ENCODE measurements at regions of chr5 and their contacts with region 1.

Region 1: DNA sequence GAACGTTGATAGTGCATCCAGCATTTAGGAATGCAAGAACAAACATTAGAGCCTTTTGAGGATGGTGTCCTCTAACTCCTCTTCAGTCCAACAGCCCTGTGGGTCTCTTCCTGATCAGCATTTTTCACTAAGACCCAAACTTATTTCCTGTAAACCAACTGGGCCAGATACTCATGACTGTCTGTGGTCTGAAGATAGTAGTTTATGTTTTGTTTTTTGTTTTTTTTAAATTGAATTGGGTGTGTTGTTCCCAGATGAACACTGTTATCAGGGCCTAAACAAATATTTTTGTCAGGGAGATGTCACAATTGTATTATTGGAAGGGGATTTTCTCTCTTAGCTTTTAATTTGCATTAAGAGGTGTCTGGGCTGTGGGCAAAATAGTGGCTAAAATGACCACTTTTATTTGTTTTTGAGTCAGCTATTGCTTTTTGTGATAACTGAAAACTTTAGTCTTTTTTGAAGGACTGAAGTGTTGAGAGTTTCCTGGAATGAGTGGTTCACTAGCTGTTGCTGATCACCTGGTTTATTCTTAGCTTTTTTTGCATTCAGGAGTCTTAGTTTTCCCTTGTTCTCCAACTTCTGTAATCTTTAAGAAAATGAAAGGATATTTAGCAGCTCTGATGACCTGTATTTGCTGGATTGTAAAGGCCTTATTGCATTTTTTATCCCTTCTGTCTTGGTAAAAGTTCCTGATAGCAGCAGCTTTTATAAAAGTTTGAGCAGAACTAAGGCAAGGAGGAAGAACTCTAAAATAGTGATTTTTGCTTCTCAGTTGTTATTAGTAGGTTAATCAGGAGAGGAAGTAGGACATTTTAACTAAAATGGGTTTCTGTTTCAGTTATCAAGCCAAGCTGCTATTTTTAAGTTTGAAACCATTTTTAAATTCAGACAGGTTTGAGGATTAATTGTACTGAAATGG is 5.5 kb downstream of the MAN2A1 start:
- DNase-seq: peak; percentile 58
- ATAC-seq: peak; percentile 47
- H3K4me3 ChIP-seq: peak overlapping the region; percentile 2; the same call in 1 of the 2 replicates
- H3K27ac ChIP-seq: peak overlapping the region; percentile 75
- H3K4me1 ChIP-seq: peaks cover 39% of the 10 kb centered on the region
- H3K27me3 ChIP-seq: no peaks in the 10 kb centered on the region
- CTCF ChIP-seq: no peak
- EP300 ChIP-seq: peak; percentile 49 to 53; a peak in 3 of 4 replicates
- POLR2A ChIP-seq: no peak
- RAD21 ChIP-seq: no peak

Region 2: DNA sequence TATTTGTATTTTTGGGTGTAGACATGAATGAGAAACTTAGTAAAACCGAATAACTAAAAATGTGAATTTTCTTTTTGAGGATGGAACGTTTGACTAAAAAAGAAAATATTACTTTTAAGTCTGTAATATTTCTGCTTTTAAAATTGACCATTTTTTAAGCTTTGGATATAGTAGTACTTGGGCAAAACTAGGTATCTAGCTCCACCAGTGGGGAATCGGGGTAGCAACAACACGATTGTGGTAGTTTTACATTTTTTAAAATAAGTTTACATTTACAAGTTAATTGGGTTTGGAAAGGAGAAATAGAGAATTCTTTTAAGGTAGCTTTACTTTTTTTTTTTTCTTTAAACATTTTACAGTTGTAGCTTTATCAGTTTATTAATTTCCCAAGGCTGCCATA is 148.9 kb after region 1 on chr5:
- CTCF ChIA-PET with region 1: interaction called, 9 read pairs
- POLR2A ChIA-PET with region 1: no interaction called
- RAD21 ChIA-PET with region 1: interaction called, 4 read pairs
- SMC1A ChIA-PET with region 1: no interaction called
- in situ Hi-C with region 1: no loop called
- intact Hi-C with region 1: loop called (anchors 1 kb)
- DNase-seq: no peak
- ATAC-seq: no peak
- H3K4me3 ChIP-seq: no peak overlapping the region
- H3K27ac ChIP-seq: no peak overlapping the region
- H3K4me1 ChIP-seq: no peaks in the 10 kb centered on the region
- H3K27me3 ChIP-seq: no peaks in the 10 kb centered on the region
- CTCF ChIP-seq: peak; percentile 9 to 19 (median 18); a peak in 2 of 6 replicates
- EP300 ChIP-seq: no peak
- POLR2A ChIP-seq: no peak
- RAD21 ChIP-seq: peak; percentile 35; the same call in 1 of the 2 replicates

Measured in GM12878 (cell line).